ENCODE measurements at regions of chr3 and their contacts with region 1.

Region 1: DNA sequence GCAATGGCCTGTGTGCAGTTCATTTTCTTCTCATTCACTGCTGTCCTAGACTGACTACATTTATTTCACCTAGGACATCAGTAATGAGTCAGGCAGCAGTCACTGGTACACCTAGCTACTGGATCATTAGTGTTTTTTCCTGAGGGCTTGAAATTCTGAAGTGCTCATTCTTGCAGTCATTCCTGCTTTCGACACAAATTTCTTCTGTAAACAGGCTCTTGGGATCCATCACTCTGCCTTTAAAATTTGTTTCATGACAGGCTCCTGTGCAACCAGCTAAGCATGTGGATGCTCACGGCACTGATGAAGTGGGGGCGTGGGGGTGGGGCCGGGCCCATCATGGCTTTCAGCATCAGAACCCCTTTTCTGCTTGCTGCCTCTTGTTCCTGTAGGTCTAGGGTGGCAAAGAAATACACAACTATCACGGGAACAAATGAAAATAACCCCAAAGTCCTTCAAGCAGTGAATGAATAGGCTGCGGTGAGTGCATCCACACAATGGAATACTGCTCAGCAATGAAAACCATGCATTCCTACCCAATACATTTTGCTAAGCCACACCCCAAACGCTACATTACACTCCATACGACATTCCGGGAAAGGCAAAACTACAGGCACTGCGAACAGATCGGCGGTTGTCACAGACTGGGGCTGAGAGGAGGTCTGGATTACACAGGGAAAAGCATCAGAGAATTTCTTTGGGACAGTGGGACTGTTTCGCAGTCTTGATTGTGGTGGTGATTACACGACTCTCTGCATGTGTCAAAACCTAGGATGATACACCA is 9.3 kb upstream of the MELTF start:
- DNase-seq: peak; percentile 83
- H3K4me3 ChIP-seq: no peak overlapping the region
- H3K27ac ChIP-seq: no peak overlapping the region
- H3K4me1 ChIP-seq: peaks cover 19% of the 10 kb centered on the region
- H3K27me3 ChIP-seq: no peaks in the 10 kb centered on the region
- CTCF ChIP-seq: no peak

Region 2: GRCh38 chr3:196948442-196949284 is 90.2 kb before region 1 on chr3:
- CTCF ChIA-PET with region 1: no interaction called
- dilution Hi-C with region 1: loop called (anchors 5 kb)
- in situ Hi-C with region 1: no loop called
- intact Hi-C with region 1: no loop called
- DNase-seq: no peak
- H3K4me3 ChIP-seq: no peak overlapping the region
- H3K27ac ChIP-seq: no peak overlapping the region
- H3K4me1 ChIP-seq: peaks cover 1% of the 10 kb centered on the region
- H3K27me3 ChIP-seq: no peaks in the 10 kb centered on the region
- CTCF ChIP-seq: peak in 1 of 2 donors; percentile 7

Region 3: GRCh38 chr3:196995646-196996371 is 43.1 kb before region 1 on chr3:
- CTCF ChIA-PET with region 1: no interaction called
- dilution Hi-C with region 1: loop called (anchors 5 kb)
- in situ Hi-C with region 1: no loop called
- intact Hi-C with region 1: no loop called
- DNase-seq: no peak
- H3K4me3 ChIP-seq: no peak overlapping the region
- H3K27ac ChIP-seq: no peak overlapping the region
- H3K4me1 ChIP-seq: peaks cover 13% of the 10 kb centered on the region
- H3K27me3 ChIP-seq: no peaks in the 10 kb centered on the region
- CTCF ChIP-seq: no peak

Measured in mammary epithelial cell (primary cell).